A673 (cell line): ENCODE measurements at regions of chr7 and their contacts with region 1.

Region 1: DNA sequence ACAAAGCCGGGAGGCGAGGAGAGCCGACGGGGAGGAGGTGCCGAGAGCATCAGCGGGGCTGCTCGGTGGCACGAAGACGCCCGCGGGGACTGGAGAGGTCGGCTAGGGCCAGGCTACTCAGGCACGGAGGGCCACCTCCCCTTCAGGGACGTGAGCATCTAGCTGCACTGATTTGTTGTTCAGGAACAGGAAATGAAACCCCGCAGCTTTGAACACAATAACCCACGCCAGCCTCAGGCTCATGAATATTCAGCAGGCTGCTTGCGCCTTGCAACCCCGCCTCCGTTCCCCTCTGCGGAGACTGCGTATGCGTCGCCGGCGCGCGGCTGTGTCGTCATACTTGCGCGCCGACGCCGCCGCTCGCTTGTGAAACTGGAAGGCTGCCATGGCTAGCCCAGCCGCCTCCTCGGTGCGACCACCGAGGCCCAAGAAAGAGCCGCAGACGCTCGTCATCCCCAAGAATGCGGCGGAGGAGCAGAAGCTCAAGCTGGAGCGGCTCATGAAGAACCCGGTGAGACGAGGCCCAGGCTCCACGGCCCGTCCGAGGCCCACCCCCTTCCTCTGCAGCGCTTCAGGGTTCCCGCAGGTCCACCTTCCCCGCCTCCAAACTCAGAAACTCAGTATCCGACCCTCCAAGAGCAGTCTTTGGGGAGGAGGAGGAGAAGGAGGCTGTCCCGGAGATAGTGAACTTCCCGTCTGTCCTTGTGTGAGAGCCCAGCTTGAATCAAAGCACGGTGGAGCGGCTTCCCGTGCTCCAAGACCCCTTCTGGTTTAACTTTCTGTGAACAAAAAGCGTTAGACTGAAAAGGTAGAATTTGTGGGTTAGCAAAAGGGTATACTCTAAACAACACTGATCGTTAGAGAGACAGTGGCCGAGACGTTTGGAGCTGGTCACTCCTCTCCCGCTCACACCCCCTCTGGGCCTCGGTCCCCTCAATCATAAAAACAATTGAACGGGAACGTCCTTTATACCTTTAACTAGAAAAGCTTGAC is at the start of gene PRKRIP1:
- DNase-seq: peak; percentile 99
- H3K4me3 ChIP-seq: peak within 1 kb of the TSS; percentile 94
- H3K27ac ChIP-seq: peak within 1 kb of the TSS; percentile 95
- H3K4me1 ChIP-seq: peaks cover 11% of the 10 kb centered on the region
- H3K27me3 ChIP-seq: no peaks in the 10 kb centered on the region
- CTCF ChIP-seq: no peak
- total RNA-seq, gene PRKRIP1: 24.9 and 30.8 TPM in 2 replicates

Region 2: GRCh38 chr7:102440078-102440795 is 43.9 kb after region 1 on chr7:
- CTCF ChIA-PET with region 1: no interaction called
- POLR2A ChIA-PET with region 1: interaction called, 19 read pairs
- intact Hi-C with region 1: no loop called
- DNase-seq: no peak
- H3K4me3 ChIP-seq: no peak overlapping the region
- H3K27ac ChIP-seq: no peak overlapping the region
- H3K4me1 ChIP-seq: no peaks in the 10 kb centered on the region
- H3K27me3 ChIP-seq: no peaks in the 10 kb centered on the region
- CTCF ChIP-seq: no peak